HEK293 (cell line): ENCODE measurements at regions of chr11 and their contacts with region 1.

Region 1: DNA sequence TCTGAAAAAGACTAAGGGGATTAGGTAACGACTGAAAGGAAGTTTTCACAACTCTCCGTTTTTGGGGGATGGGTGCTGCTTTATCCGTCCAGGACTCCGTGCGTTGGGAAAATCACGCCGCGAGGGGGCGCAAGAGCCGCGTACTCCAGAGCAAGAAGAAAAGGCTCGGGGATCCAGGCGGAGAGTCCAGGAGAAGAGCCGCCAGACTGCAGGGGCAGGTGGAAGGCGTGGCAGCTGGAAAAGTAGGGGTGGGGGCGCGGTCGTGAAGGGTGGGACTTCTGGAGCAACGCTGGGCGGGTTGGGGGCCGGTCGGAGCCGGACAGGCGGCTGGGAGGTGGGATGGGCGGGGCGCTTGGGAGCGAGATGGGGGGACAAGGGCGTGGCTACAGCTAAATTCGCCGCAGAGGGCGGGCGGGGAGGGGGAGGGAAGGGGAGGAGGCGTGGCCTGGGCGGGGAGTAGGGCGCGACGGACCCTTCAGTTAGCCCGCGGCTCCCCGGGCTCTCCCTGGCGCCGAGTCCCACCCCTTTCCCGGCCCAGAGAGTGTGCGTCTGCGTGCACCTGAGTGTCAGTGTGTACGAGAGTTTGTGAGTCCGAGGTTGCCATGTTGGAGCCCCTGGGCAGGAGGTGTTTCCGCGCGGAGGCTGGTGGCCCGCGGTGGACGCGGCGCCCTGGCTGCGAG is 613 bp upstream of the ARHGEF17 start:
- H3K4me3 ChIP-seq: peak overlapping the region; percentile 57
- H3K27ac ChIP-seq: peak overlapping the region; percentile 80
- H3K4me1 ChIP-seq: 0 out of 2 replicates have a peak, but pooled peaks cover 3% of the 10 kb centered on the region
- CTCF ChIP-seq: peak; percentile 83

Region 2: GRCh38 chr11:73288873-73289707 is 18.4 kb before region 1 on chr11:
- CTCF ChIA-PET with region 1: interaction called, 75 read pairs
- POLR2A ChIA-PET with region 1: interaction called, 6 read pairs
- H3K4me3 ChIP-seq: peak overlapping the region; percentile 29
- H3K27ac ChIP-seq: no peak overlapping the region; the same call in 1 of the 2 replicates
- H3K4me1 ChIP-seq: no peaks in the 10 kb centered on the region
- CTCF ChIP-seq: peak; percentile 83

Region 3: DNA sequence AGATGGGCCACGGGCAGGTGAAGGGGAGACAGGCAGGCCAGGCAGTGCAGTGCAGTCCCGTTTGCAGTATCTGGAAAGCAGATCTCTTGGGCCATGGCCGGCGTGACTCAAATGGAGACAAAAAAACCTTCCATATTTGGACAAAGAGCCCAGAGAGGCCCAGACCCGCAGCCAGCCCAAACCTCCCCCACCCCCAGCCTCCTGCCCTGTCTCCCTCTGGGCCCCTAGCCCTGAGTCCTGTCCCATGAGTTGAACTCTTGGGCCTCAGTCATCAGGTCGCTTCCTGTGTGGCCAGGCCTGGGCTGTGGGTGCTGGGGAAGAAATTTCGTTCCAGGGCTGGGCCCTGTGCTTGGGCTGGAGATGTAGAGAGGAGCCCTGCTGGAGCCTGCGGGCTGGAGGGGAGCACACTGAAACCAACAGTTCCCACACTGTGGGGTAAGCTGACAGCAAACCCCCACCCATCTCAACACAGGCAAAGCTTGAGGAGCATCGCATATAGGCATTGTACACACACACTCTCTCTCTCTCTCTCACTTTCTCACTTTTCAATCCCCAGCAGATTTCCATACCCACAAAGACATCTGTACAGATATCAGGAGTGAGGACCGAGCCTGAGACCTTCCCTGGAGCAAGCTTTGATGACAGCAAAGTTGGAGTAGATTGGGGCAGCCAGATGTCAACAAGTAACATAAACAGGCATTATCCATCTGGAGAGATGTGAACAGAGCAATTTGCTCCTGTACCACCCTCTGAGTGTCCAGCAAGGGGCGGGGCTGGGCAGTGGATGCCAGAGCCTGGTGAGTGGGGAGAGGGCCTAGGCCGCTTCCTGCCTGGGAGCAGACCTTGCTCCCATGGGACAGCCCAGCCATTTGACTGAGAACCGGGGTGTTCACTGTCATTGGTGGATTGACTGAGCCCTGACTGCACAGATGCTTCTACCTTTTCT is 17.8 kb after region 1 on chr11:
- CTCF ChIA-PET with region 1: interaction called, 74 read pairs
- POLR2A ChIA-PET with region 1: interaction called, 32 read pairs
- H3K4me3 ChIP-seq: no peak overlapping the region
- H3K27ac ChIP-seq: no peak overlapping the region
- H3K4me1 ChIP-seq: peaks cover 5% of the 10 kb centered on the region; the same call in 1 of the 2 replicates
- CTCF ChIP-seq: no peak

Region 4: GRCh38 chr11:73350908-73351636 is 43.6 kb after region 1 on chr11:
- CTCF ChIA-PET with region 1: interaction called, 56 read pairs
- POLR2A ChIA-PET with region 1: interaction called, 8 read pairs
- H3K4me3 ChIP-seq: no peak overlapping the region
- H3K27ac ChIP-seq: no peak overlapping the region
- H3K4me1 ChIP-seq: no peaks in the 10 kb centered on the region
- CTCF ChIP-seq: peak; percentile 60

Region 5: GRCh38 chr11:73372371-73372993 is 65.0 kb after region 1 on chr11:
- CTCF ChIA-PET with region 1: interaction called, 13 read pairs
- POLR2A ChIA-PET with region 1: interaction called, 6 read pairs
- H3K4me3 ChIP-seq: no peak overlapping the region
- H3K27ac ChIP-seq: no peak overlapping the region
- H3K4me1 ChIP-seq: no peaks in the 10 kb centered on the region
- CTCF ChIP-seq: no peak

Region 6: GRCh38 chr11:73404048-73404447 is 96.6 kb after region 1 on chr11:
- CTCF ChIA-PET with region 1: interaction called, 5 read pairs
- POLR2A ChIA-PET with region 1: interaction called, 10 read pairs
- H3K4me3 ChIP-seq: no peak overlapping the region
- H3K27ac ChIP-seq: no peak overlapping the region
- H3K4me1 ChIP-seq: no peaks in the 10 kb centered on the region
- CTCF ChIP-seq: peak; percentile 49; the same call in 1 of the 2 replicates